ENCODE measurements at regions of chr12 and their contacts with region 1.

Region 1: GRCh38 chr12:51531978-51532497 is 59.0 kb upstream of the SCN8A start:
- DNase-seq: peak; percentile 67
- ATAC-seq: peak; percentile 98
- H3K4me3 ChIP-seq: no peak overlapping the region
- H3K27ac ChIP-seq: no peak overlapping the region
- H3K4me1 ChIP-seq: peaks cover 0 to 12% of the 10 kb centered on the region in 2 experiments; a peak in 2 of 4 replicates
- H3K27me3 ChIP-seq: peaks cover 5% of the 10 kb centered on the region; the same call in 1 of the 2 replicates
- CTCF ChIP-seq: peak; percentile 81 to 88 (median 85)
- POLR2A ChIP-seq: no peak
- RAD21 ChIP-seq: peak; percentile 91

Region 2: GRCh38 chr12:51424662-51425438 is 107.2 kb before region 1 on chr12 and contains the start of gene SLC4A8:
- CTCF ChIA-PET with region 1: interaction called, 30 read pairs
- POLR2A ChIA-PET with region 1: no interaction called
- RAD21 ChIA-PET with region 1: interaction called, 4 read pairs
- intact Hi-C with region 1: loop called (anchors 1 kb)
- DNase-seq: peak; percentile 57
- ATAC-seq: peak; percentile 94
- H3K4me3 ChIP-seq: peak within 1 kb of the TSS; percentile 37 to 51
- H3K27ac ChIP-seq: no peak within 1 kb of the TSS
- H3K4me1 ChIP-seq: peaks cover 7 to 9% of the 10 kb centered on the region in 2 experiments; a peak in 2 of 4 replicates
- H3K27me3 ChIP-seq: no peaks in the 10 kb centered on the region
- CTCF ChIP-seq: peak; percentile 71 to 84 (median 83)
- POLR2A ChIP-seq: no peak
- RAD21 ChIP-seq: peak; percentile 71
- total RNA-seq, gene SLC4A8: 1.4 TPM

Region 3: DNA sequence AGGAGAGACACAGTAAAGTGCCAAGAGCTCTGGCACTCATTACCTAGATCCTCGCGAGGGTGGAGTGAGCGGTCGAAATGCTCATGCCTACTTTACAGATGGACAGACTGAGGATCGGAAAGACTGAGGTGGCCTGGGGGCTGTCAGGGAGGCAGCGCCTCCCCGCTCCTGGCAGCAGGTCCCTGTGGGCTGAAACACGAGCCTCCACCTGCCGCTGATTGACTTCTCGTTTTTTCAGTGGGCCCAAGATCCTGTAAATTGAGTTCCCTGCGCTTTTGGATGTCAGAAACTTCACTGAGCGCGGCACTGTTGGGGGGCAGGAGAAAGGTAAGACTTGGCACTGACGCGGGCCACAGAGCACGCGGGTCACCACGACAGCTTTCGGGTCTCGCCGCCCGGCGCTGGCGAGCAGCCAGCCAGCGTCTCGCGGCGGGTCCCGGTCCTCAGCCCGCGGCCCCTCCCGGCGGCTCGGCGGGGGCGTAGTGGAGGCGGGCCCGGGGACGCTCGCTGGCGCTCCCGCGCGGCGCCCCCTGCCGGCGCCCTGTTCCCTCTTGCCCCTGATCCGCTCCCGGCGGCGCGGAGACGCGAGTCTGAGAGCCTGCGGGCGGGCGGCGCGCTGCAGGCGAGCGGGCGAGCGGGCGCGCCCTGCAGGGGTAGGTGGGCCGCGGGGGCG is 58.4 kb after region 1 on chr12:
- CTCF ChIA-PET with region 1: no interaction called
- POLR2A ChIA-PET with region 1: no interaction called
- RAD21 ChIA-PET with region 1: no interaction called
- intact Hi-C with region 1: loop called (anchors 2 kb)
- DNase-seq: peak; percentile 51
- ATAC-seq: peak; percentile 92
- H3K4me3 ChIP-seq: peak overlapping the region; percentile 51 to 59
- H3K27ac ChIP-seq: peak overlapping the region; percentile 47
- H3K4me1 ChIP-seq: peaks cover 5 to 13% of the 10 kb centered on the region in 2 experiments; a peak in 3 of 4 replicates
- H3K27me3 ChIP-seq: no peaks in the 10 kb centered on the region
- CTCF ChIP-seq: peak; percentile 37 to 52 (median 41); a peak in 4 of 6 replicates
- POLR2A ChIP-seq: no peak
- RAD21 ChIP-seq: peak; percentile 21; the same call in 1 of the 2 replicates

Region 4: DNA sequence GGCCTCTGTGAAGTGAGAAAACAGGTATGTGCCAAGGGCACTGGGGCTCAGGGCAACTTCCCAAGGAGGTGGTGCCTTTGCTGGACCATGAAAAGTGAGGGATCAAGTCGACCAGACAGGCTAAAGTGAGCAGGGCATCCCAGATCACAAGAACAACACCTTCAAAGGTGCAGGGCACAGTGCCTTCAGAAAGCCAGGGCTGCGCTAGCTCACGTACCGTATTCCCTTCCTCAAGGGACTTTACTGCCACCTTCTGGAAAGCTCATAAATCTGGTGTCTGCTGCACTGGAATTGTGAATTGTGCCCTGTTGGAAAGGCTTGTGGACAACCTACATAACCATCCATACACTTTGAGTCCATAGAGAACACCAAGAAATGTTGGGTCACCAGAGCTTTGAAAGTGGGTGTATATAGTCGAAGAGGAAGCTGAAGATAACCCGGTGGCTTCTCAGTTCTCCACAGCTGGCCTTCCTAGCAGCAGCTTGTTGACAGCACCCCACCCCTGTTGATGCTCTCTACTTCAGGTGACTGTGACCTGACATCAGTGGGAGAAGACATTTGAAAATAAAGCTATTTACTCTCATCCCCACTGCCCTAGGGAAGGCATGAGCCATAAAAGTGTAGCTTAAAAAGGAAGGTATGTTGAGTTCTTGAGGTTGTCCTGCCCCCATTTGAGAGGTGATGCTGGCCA is 292.0 kb after region 1 on chr12:
- CTCF ChIA-PET with region 1: interaction called, 16 read pairs
- POLR2A ChIA-PET with region 1: no interaction called
- RAD21 ChIA-PET with region 1: interaction called in 1 of 2 experiments, 3 read pairs
- intact Hi-C with region 1: loop called (anchors 2 kb)
- DNase-seq: peak; percentile 59
- ATAC-seq: peak; percentile 67
- H3K4me3 ChIP-seq: no peak overlapping the region
- H3K27ac ChIP-seq: no peak overlapping the region
- H3K4me1 ChIP-seq: peaks cover 10 to 26% of the 10 kb centered on the region in 2 experiments
- H3K27me3 ChIP-seq: no peaks in the 10 kb centered on the region
- CTCF ChIP-seq: peak; percentile 67 to 74 (median 69)
- POLR2A ChIP-seq: no peak
- RAD21 ChIP-seq: peak; percentile 86